ENCODE measurements at regions of chr1 and their contacts with region 1.

Region 1: DNA sequence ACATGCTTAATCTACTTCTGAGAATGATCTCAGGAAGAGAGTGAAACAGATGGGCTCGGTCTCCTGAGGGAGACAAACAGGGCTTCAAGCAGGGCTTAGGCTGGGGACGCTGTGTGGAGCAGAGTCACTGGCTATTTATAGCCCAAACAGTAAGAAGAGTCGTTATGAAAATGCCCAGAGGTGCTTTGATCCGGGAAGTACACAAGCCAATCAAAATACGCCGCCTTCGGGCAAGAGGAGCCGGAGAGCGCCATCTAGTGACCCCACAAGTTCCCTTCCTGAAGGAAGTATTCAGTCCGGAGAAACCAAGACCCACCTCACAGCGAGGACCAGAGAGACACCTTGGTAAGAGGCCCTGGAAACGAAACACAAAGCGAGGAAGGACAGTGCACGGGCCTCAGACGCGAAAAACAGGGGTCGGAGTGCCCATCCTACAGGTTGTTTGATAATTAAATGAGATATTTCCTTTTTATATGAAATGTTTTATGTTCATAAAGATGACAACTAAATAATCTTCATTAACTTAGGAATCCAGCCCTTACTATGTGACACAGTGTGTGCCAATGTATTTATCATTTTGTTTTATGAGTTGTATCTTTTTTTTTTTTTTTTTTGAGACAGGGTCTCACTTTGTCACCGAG is 25.0 kb upstream of the SCCPDH start:
- DNase-seq: peak; percentile 85
- ATAC-seq: peak; percentile 94
- H3K4me3 ChIP-seq: peak overlapping the region in 1 of 2 experiments; percentile 35; a peak in 1 of 4 replicates
- H3K27ac ChIP-seq: no peak overlapping the region
- H3K4me1 ChIP-seq: peaks cover 3 to 20% of the 10 kb centered on the region in 2 experiments; a peak in 3 of 4 replicates
- H3K27me3 ChIP-seq: no peaks in the 10 kb centered on the region
- CTCF ChIP-seq: peak; percentile 79 to 89 (median 84)
- POLR2A ChIP-seq: no peak
- RAD21 ChIP-seq: peak; percentile 85

Region 2: DNA sequence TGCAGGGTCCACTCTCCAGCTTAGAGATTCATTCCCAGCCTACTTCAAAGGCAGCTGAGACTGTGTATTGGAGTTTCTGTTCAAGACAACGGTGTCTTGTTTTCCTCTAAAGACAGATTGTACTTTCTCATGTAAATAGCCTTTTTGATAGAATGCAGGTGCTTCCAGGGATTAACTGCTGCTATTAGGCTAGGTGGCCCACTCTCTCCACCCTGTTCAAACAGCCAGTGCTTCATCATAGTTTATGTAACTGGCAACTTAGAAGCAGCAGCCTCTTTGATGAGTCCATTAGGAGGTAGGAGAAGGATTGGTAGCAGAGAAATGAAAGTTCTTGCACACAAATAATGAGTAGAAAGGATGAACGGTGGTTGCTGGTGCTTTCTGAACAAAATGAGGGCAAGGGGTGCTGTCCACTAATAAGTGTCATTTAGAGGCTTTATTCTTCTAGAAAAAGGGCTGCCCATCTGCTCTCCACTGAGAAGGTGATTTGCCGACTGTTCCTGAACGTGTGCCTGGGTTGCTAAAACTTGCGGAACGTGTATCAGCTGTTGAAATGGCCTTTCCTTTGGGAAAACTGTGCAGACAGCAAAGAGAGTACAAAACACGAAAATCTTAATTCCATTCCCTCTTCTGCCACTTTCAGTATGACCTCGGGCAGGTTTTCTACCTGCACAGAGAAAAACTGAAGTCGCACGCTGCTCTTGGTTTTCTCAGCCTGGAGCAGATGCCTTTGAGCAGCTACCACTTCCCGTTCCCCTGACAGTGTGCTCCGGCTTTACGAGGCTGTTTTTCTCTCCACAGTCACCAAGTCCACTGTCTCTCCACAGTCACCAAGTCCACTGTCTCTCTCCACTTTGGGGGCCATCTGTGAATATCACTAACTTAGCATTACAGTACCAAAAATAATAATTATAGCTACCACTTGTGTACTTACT is 1315.6 kb before region 1 on chr1:
- CTCF ChIA-PET with region 1: no interaction called
- POLR2A ChIA-PET with region 1: no interaction called
- RAD21 ChIA-PET with region 1: no interaction called
- intact Hi-C with region 1: no loop called
- DNase-seq: no peak
- ATAC-seq: no peak
- H3K4me3 ChIP-seq: no peak overlapping the region
- H3K27ac ChIP-seq: no peak overlapping the region
- H3K4me1 ChIP-seq: peaks cover 0 to 3% of the 10 kb centered on the region in 2 experiments; a peak in 1 of 4 replicates
- H3K27me3 ChIP-seq: peaks cover 28% of the 10 kb centered on the region
- CTCF ChIP-seq: no peak
- POLR2A ChIP-seq: no peak
- RAD21 ChIP-seq: no peak

Region 3: GRCh38 chr1:246497331-246497915 is 201.8 kb before region 1 on chr1:
- CTCF ChIA-PET with region 1: no interaction called
- POLR2A ChIA-PET with region 1: no interaction called
- RAD21 ChIA-PET with region 1: no interaction called
- intact Hi-C with region 1: loop called (anchors 1 kb)
- DNase-seq: peak; percentile 60
- ATAC-seq: peak; percentile 65
- H3K4me3 ChIP-seq: no peak overlapping the region
- H3K27ac ChIP-seq: no peak overlapping the region
- H3K4me1 ChIP-seq: peaks cover 0 to 3% of the 10 kb centered on the region in 2 experiments; a peak in 2 of 4 replicates
- H3K27me3 ChIP-seq: no peaks in the 10 kb centered on the region
- CTCF ChIP-seq: peak; percentile 57 to 77 (median 77); a peak in 5 of 6 replicates
- POLR2A ChIP-seq: no peak
- RAD21 ChIP-seq: peak; percentile 77

Region 4: DNA sequence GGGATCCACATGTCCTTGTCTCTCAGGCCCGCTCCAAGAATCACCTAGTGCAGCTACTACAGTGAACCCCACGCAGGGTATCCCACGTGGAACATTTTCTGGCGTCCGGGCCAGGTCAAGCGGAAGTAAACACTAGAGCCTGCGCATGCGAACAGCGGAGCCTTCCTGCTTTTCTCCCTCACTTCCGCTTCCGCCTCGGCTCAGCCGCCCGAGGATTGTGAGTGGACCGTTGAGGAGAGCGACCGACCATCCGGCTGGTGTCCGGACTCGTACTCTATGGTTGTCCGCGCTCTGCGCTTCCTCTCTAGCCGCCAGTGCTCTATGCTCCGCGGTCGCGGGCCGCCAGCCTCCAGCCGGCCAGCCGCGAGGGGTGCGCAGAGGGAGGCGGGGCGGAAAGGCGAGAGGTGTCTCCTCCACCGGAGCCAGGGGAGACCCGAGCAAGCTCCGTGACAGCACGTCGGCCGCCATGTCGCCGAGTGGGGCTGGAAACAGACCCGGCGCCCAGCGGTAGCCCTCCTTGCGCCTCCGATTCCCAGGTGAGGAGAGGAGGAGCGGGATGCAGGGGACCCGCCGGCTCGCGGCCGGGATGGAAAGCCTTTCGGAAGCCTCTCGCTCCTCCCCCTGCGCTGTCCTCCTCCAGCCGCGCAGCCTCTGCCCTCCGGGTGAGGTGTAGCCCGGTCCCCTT is 132.9 kb before region 1 on chr1 and contains the starts of genes CNST and TFB2M:
- CTCF ChIA-PET with region 1: no interaction called
- POLR2A ChIA-PET with region 1: no interaction called
- RAD21 ChIA-PET with region 1: no interaction called
- intact Hi-C with region 1: loop called (anchors 2 kb)
- DNase-seq: peak; percentile 97
- ATAC-seq: peak; percentile 95
- H3K4me3 ChIP-seq: peak within 1 kb of the TSS; percentile 73 to 92
- H3K27ac ChIP-seq: peak within 1 kb of the TSS; percentile 82
- H3K4me1 ChIP-seq: peaks cover 10 to 16% of the 10 kb centered on the region in 2 experiments
- H3K27me3 ChIP-seq: no peaks in the 10 kb centered on the region
- CTCF ChIP-seq: no peak
- POLR2A ChIP-seq: peak; percentile 43
- RAD21 ChIP-seq: no peak
- total RNA-seq, gene CNST: 13.5 TPM
- total RNA-seq, gene TFB2M: 24.4 TPM

Region 5: DNA sequence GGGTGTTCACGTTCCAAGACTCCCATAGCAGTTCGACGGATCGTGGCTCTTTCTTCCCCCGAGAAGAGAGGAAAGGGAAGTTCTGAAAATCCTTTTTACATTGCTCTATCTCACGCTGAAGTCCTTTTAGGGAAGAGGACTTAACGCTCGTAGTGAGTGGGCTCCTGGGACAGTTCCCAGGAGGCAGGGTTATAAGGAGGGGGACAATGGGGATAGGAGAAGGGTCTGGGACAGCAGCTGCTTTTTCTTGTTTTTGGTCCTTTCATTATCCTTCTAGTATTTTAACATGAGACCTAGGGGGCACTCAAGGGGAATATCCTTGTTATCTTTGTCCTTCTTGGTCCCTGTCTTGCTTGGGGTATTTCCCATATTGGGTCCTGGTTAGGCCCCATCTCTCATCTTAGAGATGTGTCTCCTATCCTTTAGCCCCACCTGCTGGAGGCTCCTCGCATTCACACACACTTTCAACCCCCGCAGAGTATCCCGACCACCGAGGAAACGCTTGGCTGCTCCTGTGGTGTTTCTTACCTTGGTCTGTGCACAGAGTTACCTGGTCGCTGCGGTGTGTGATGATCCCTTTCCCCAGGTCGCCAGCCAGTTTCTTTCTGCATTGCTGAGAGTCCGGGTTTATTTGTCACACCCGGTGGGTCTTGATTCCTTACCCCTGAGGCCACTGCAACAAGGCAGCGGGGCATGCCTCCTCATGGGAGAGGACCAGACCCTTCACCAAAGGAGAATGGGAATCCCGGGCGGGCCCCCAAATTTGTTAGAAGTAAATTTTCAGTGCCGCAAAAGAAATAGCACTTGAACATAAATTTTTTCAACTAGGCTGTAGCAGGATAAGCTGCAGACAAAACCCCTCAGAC is 54.7 kb after region 1 on chr1:
- CTCF ChIA-PET with region 1: no interaction called
- POLR2A ChIA-PET with region 1: no interaction called
- RAD21 ChIA-PET with region 1: no interaction called
- intact Hi-C with region 1: loop called (anchors 2 kb)
- DNase-seq: peak; percentile 52
- ATAC-seq: peak; percentile 98
- H3K4me3 ChIP-seq: peak overlapping the region; percentile 9 to 33; a peak in 2 of 4 replicates
- H3K27ac ChIP-seq: no peak overlapping the region
- H3K4me1 ChIP-seq: 0 out of 4 replicates have a peak, but pooled peaks cover 0 to 3% of the 10 kb centered on the region in 2 experiments
- H3K27me3 ChIP-seq: no peaks in the 10 kb centered on the region
- CTCF ChIP-seq: peak; percentile 71 to 82 (median 78)
- POLR2A ChIP-seq: no peak
- RAD21 ChIP-seq: peak; percentile 92

Region 6: GRCh38 chr1:246919902-246920301 is 220.7 kb after region 1 on chr1:
- CTCF ChIA-PET with region 1: no interaction called
- POLR2A ChIA-PET with region 1: no interaction called
- RAD21 ChIA-PET with region 1: no interaction called
- intact Hi-C with region 1: no loop called
- DNase-seq: no peak
- ATAC-seq: no peak
- H3K4me3 ChIP-seq: no peak overlapping the region
- H3K27ac ChIP-seq: no peak overlapping the region
- H3K4me1 ChIP-seq: no peaks in the 10 kb centered on the region
- H3K27me3 ChIP-seq: no peaks in the 10 kb centered on the region
- CTCF ChIP-seq: no peak
- POLR2A ChIP-seq: no peak
- RAD21 ChIP-seq: no peak